B cell (primary cell): ENCODE measurements at regions of chr17 and their contacts with region 1.

Region 1: GRCh38 chr17:82648166-82648668 is at the start of gene WDR45B:
- DNase-seq: peak; percentile 96
- ATAC-seq: peak; percentile 89
- H3K4me3 ChIP-seq: peak within 1 kb of the TSS; percentile 41 to 85 (median 75)
- H3K4me3 Mint-ChIP-seq: peak within 1 kb of the TSS; percentile 92
- H3K27ac ChIP-seq: peak within 1 kb of the TSS; percentile 83 to 89
- H3K27ac Mint-ChIP-seq: peak within 1 kb of the TSS; percentile 97
- H3K4me1 ChIP-seq: peaks cover 15 to 20% of the 10 kb centered on the region in 2 donors
- H3K4me1 Mint-ChIP-seq: peaks cover 23% of the 10 kb centered on the region
- H3K27me3 ChIP-seq: no peaks in the 10 kb centered on the region
- H3K27me3 Mint-ChIP-seq: no peaks in the 10 kb centered on the region
- CTCF ChIP-seq: no peak
- total RNA-seq, gene WDR45B: 63.3 and 72.7 TPM in 2 replicates

Region 2: DNA sequence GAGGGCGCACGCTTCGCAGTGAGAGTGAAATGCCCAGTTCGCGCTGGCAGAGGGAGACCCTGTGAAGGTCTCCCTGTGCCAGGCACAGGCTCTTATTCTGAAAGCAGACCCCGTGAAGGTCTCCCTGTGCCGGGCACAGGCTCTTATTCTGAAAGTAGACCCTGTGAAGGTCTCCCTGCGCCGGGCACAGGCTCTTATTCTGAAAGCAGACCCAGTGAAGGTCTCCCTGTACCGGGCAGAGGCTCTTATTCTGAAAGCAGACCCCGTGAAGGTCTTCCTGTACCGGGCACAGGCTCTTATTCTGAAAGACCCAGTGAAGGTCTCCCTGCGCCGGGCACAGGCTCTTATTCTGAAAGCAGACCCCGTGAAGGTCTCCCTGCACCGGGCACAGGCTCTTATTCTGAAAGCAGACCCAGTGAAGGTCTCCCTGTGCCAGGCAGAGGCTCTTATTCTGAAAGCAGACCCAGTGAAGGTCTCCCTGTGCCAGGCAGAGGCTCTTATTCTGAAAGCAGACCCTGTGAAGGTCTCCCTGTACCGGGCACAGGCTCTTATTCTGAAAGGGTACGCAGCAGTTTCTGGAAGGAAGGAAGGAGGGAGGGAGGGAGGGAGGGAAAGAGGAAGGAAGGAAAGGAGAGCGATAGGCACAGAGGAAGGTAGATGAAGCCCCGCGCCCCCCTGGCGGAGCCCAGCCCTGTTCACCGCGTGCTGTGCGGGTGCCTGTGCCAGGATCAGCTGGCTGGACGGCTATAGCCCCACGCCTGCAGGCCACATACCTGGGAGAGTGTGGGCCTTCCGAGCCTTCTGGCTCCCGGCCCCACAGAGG is 55.2 kb before region 1 on chr17:
- CTCF ChIA-PET with region 1: no interaction called
- POLR2A ChIA-PET with region 1: no interaction called
- intact Hi-C with region 1: loop called (anchors 1 kb)
- DNase-seq: peak; percentile 85
- ATAC-seq: peak; percentile 42
- H3K4me3 ChIP-seq: peak overlapping the region in 4 of 5 experiments; percentile 45 to 61 (median 55)
- H3K4me3 Mint-ChIP-seq: peak overlapping the region; percentile 77
- H3K27ac ChIP-seq: peak overlapping the region; percentile 65 to 66
- H3K27ac Mint-ChIP-seq: peak overlapping the region; percentile 74
- H3K4me1 ChIP-seq: peaks cover 27 to 52% of the 10 kb centered on the region in 2 donors
- H3K4me1 Mint-ChIP-seq: peaks cover 50% of the 10 kb centered on the region
- H3K27me3 ChIP-seq: no peaks in the 10 kb centered on the region
- H3K27me3 Mint-ChIP-seq: no peaks in the 10 kb centered on the region
- CTCF ChIP-seq: no peak

Region 3: GRCh38 chr17:82623707-82624106 is 24.5 kb before region 1 on chr17:
- CTCF ChIA-PET with region 1: no interaction called
- POLR2A ChIA-PET with region 1: no interaction called
- intact Hi-C with region 1: no loop called
- DNase-seq: no peak
- ATAC-seq: no peak
- H3K4me3 ChIP-seq: no peak overlapping the region
- H3K4me3 Mint-ChIP-seq: no peak overlapping the region
- H3K27ac ChIP-seq: no peak overlapping the region
- H3K27ac Mint-ChIP-seq: no peak overlapping the region
- H3K4me1 ChIP-seq: no peaks in the 10 kb centered on the region
- H3K4me1 Mint-ChIP-seq: no peaks in the 10 kb centered on the region
- H3K27me3 ChIP-seq: no peaks in the 10 kb centered on the region
- H3K27me3 Mint-ChIP-seq: no peaks in the 10 kb centered on the region
- CTCF ChIP-seq: no peak

Region 4: GRCh38 chr17:82710499-82711232 is 62.4 kb after region 1 on chr17:
- CTCF ChIA-PET with region 1: no interaction called
- POLR2A ChIA-PET with region 1: no interaction called
- intact Hi-C with region 1: no loop called
- DNase-seq: no peak
- ATAC-seq: no peak
- H3K4me3 ChIP-seq: no peak overlapping the region
- H3K4me3 Mint-ChIP-seq: no peak overlapping the region
- H3K27ac ChIP-seq: no peak overlapping the region
- H3K27ac Mint-ChIP-seq: no peak overlapping the region
- H3K4me1 ChIP-seq: peaks cover 3 to 22% of the 10 kb centered on the region in 2 donors
- H3K4me1 Mint-ChIP-seq: peaks cover 10% of the 10 kb centered on the region
- H3K27me3 ChIP-seq: no peaks in the 10 kb centered on the region
- H3K27me3 Mint-ChIP-seq: no peaks in the 10 kb centered on the region
- CTCF ChIP-seq: no peak